CD4-positive, alpha-beta memory T cell (primary cell): ENCODE measurements at regions of chrX and their contacts with region 1.

Region 1: GRCh38 chrX:46446727-46447378 is 98.4 kb downstream of the ZNF674 start:
- DNase-seq: peak; percentile 80 to 88 (median 83)
- H3K4me3 ChIP-seq: peak overlapping the region; percentile 78 to 79
- H3K4me3 Mint-ChIP-seq: peak overlapping the region; percentile 85 to 90 (median 86)
- H3K27ac ChIP-seq: peak overlapping the region; percentile 73
- H3K27ac Mint-ChIP-seq: peak overlapping the region; percentile 87 to 94 (median 92)
- H3K4me1 ChIP-seq: peaks cover 14% of the 10 kb centered on the region
- H3K4me1 Mint-ChIP-seq: peaks cover 7 to 19% (median 14%) of the 10 kb centered on the region in 4 donors
- H3K27me3 ChIP-seq: no peaks in the 10 kb centered on the region
- H3K27me3 Mint-ChIP-seq: no peaks in the 10 kb centered on the region

Region 2: DNA sequence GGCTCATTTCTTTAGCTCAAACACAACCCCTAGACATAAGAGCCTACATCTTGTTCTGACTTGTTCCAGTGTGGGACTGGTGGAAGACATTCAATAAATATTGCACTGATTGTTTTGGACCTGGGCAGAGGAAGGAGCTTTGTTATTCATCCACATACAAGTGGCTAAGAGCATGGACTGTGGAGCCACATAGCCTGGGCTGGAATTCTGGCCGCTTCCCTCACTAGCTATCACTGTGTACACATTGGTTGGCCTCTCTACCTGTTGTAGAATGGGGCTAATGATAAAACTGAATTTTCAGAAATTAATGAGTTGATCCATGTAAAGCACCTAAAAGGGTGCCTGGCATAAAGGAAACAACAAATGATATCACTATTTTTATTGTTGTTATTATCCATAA is 18.4 kb after region 1 on chrX:
- CTCF ChIA-PET with region 1: no interaction called
- POLR2A ChIA-PET with region 1: no interaction called
- intact Hi-C with region 1: no loop called
- DNase-seq: no peak
- H3K4me3 ChIP-seq: no peak overlapping the region
- H3K4me3 Mint-ChIP-seq: no peak overlapping the region
- H3K27ac ChIP-seq: no peak overlapping the region
- H3K27ac Mint-ChIP-seq: peak overlapping the region in 1 of 7 donors; percentile 30
- H3K4me1 ChIP-seq: no peaks in the 10 kb centered on the region
- H3K4me1 Mint-ChIP-seq: peaks cover 10 to 16% (median 12%) of the 10 kb centered on the region in 4 donors
- H3K27me3 ChIP-seq: no peaks in the 10 kb centered on the region
- H3K27me3 Mint-ChIP-seq: no peaks in the 10 kb centered on the region

Region 3: GRCh38 chrX:46545111-46546005 is 98.5 kb after region 1 on chrX and contains the start of gene ZNF674:
- CTCF ChIA-PET with region 1: no interaction called
- POLR2A ChIA-PET with region 1: no interaction called
- intact Hi-C with region 1: loop called (anchors 2 kb)
- DNase-seq: peak; percentile 91 to 97 (median 92)
- H3K4me3 ChIP-seq: peak within 1 kb of the TSS; percentile 61 to 81
- H3K4me3 Mint-ChIP-seq: peak within 1 kb of the TSS; percentile 89 to 97 (median 94)
- H3K27ac ChIP-seq: peak within 1 kb of the TSS; percentile 94
- H3K27ac Mint-ChIP-seq: peak within 1 kb of the TSS; percentile 91 to 99 (median 98)
- H3K4me1 ChIP-seq: peaks cover 29% of the 10 kb centered on the region
- H3K4me1 Mint-ChIP-seq: peaks cover 14 to 35% (median 22%) of the 10 kb centered on the region in 4 donors
- H3K27me3 ChIP-seq: no peaks in the 10 kb centered on the region
- H3K27me3 Mint-ChIP-seq: no peaks in the 10 kb centered on the region
- total RNA-seq, gene ZNF674: 6.0 to 8.6 TPM